ENCODE measurements at regions of chr18 and their contacts with region 1.

Region 1: GRCh38 chr18:74476140-74476539 is 19.0 kb upstream of the DIPK1C start:
- DNase-seq: no peak
- H3K4me3 ChIP-seq: no peak overlapping the region
- H3K27ac ChIP-seq: no peak overlapping the region
- H3K4me1 ChIP-seq: no peaks in the 10 kb centered on the region
- H3K27me3 ChIP-seq: no peaks in the 10 kb centered on the region
- CTCF ChIP-seq: peak in 3 of 4 experiments; percentile 38 to 59 (median 46)
- EP300 ChIP-seq: no peak
- POLR2A ChIP-seq: no peak

Region 2: DNA sequence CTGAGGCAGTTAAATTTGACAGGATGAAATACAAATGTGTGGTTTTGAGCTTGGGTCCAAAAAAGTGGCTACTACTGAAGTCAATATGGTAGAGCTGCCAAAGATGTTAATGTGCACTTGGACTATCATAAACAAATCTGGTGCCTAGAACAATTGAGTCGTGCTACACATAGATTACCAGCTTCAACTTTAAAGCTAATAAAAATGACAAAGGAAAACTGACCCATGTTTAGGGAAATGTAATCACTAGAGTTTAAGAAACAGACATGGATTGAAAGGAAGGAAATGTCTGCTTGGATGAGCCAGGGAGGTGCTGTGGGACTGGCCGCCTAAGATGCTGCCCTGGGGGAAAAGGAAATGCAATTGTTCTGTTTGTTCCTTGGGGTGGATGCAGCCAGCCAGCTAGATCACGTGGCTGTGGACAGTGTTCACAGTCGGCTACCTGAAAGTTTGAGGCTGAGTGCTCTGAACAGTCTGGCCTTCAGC is 221.0 kb before region 1 on chr18:
- intact Hi-C with region 1: no loop called
- DNase-seq: peak; percentile 81
- H3K4me3 ChIP-seq: no peak overlapping the region
- H3K27ac ChIP-seq: peak overlapping the region in 3 of 4 donors; percentile 67 to 72 (median 68)
- H3K4me1 ChIP-seq: peaks cover 0 to 56% (median 36%) of the 10 kb centered on the region in 4 donors
- H3K27me3 ChIP-seq: no peaks in the 10 kb centered on the region
- CTCF ChIP-seq: no peak
- EP300 ChIP-seq: peak in 1 of 4 donors; percentile 60
- POLR2A ChIP-seq: no peak

Region 3: GRCh38 chr18:74353169-74353775 is 122.9 kb before region 1 on chr18:
- intact Hi-C with region 1: loop called (anchors 5 kb)
- DNase-seq: peak; percentile 78
- H3K4me3 ChIP-seq: no peak overlapping the region
- H3K27ac ChIP-seq: no peak overlapping the region
- H3K4me1 ChIP-seq: no peaks in the 10 kb centered on the region
- H3K27me3 ChIP-seq: no peaks in the 10 kb centered on the region
- CTCF ChIP-seq: peak; percentile 65 to 77 (median 73)
- EP300 ChIP-seq: no peak
- POLR2A ChIP-seq: no peak

Region 4: DNA sequence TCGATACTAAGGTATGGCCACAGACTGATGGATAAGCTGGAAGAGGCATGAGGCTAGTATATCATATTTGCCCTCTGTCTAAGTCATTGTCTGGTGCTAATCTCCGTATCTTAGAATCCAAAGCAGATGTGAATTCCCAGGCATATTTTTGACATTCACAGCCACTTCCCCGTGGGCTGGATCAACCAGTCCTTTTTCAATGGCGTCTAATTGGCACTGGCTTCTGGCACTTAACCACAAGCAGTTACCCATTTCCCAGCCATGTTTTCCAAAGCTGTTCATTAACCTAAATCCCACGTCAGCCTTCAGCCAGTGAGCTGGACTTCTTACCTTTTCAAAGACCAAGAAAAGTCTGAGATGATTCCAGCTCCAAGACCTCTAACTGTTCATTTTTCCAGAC is 100.9 kb after region 1 on chr18:
- intact Hi-C with region 1: no loop called
- DNase-seq: no peak
- H3K4me3 ChIP-seq: no peak overlapping the region
- H3K27ac ChIP-seq: no peak overlapping the region
- H3K4me1 ChIP-seq: no peaks in the 10 kb centered on the region
- H3K27me3 ChIP-seq: no peaks in the 10 kb centered on the region
- CTCF ChIP-seq: no peak
- EP300 ChIP-seq: no peak
- POLR2A ChIP-seq: no peak